ENCODE measurements at regions of chr4 and their contacts with region 1.

Region 1: GRCh38 chr4:117560329-117560728 is 474.0 kb upstream of the NDST3 start:
- DNase-seq: peak; percentile 50
- ATAC-seq: no peak; the same call in none of the 2 replicates
- H3K4me3 ChIP-seq: no peak overlapping the region
- H3K27ac ChIP-seq: no peak overlapping the region
- H3K4me1 ChIP-seq: no peaks in the 10 kb centered on the region
- H3K27me3 ChIP-seq: no peaks in the 10 kb centered on the region
- CTCF ChIP-seq: peak; percentile 52; the same call in 1 of the 2 replicates

Region 2: GRCh38 chr4:116849620-116850019 is 710.7 kb before region 1 on chr4:
- CTCF ChIA-PET with region 1: no interaction called
- POLR2A ChIA-PET with region 1: no interaction called
- intact Hi-C with region 1: loop called (anchors 2 kb)
- DNase-seq: no peak
- ATAC-seq: peak; percentile 54
- H3K4me3 ChIP-seq: no peak overlapping the region
- H3K27ac ChIP-seq: no peak overlapping the region
- H3K4me1 ChIP-seq: no peaks in the 10 kb centered on the region
- H3K27me3 ChIP-seq: no peaks in the 10 kb centered on the region
- CTCF ChIP-seq: peak; percentile 29; the same call in 1 of the 2 replicates

Region 3: GRCh38 chr4:117447925-117448324 is 112.4 kb before region 1 on chr4:
- CTCF ChIA-PET with region 1: no interaction called
- POLR2A ChIA-PET with region 1: no interaction called
- intact Hi-C with region 1: no loop called
- DNase-seq: no peak
- ATAC-seq: no peak
- H3K4me3 ChIP-seq: no peak overlapping the region
- H3K27ac ChIP-seq: no peak overlapping the region
- H3K4me1 ChIP-seq: no peaks in the 10 kb centered on the region
- H3K27me3 ChIP-seq: no peaks in the 10 kb centered on the region
- CTCF ChIP-seq: peak; percentile 48

Region 4: GRCh38 chr4:117481742-117482141 is 78.6 kb before region 1 on chr4:
- CTCF ChIA-PET with region 1: no interaction called
- POLR2A ChIA-PET with region 1: no interaction called
- intact Hi-C with region 1: no loop called
- DNase-seq: no peak
- ATAC-seq: no peak
- H3K4me3 ChIP-seq: no peak overlapping the region
- H3K27ac ChIP-seq: no peak overlapping the region
- H3K4me1 ChIP-seq: no peaks in the 10 kb centered on the region
- H3K27me3 ChIP-seq: no peaks in the 10 kb centered on the region
- CTCF ChIP-seq: no peak

Region 5: DNA sequence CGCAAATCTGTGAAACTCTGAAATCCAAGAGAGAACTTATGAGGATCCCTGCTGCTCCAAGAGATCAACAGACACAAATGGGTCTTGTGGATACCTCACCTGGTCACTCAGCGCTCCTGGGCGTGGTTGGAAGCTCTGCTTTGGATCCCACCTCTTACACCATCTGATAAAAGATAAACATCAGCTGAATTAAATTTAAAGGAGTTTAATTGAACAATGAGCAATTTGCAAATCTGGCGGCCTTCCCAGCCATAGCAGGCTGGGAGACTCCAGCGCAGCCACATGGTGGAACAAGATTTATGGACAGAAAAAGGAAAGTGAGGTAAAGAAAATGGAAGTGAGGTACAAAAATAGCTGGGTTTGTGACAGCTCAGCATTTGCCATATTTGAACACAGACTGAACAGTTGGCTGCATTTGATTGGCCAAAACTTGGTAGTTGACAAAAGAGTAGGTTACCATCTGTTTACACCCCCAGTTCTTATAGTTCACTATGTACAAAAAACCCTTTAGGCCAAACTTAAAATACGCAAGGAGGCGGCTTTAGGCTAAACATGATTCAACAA is 36.7 kb after region 1 on chr4:
- CTCF ChIA-PET with region 1: no interaction called
- POLR2A ChIA-PET with region 1: no interaction called
- intact Hi-C with region 1: no loop called
- DNase-seq: no peak
- ATAC-seq: no peak
- H3K4me3 ChIP-seq: no peak overlapping the region
- H3K27ac ChIP-seq: no peak overlapping the region
- H3K4me1 ChIP-seq: no peaks in the 10 kb centered on the region
- H3K27me3 ChIP-seq: no peaks in the 10 kb centered on the region
- CTCF ChIP-seq: no peak

Region 6: GRCh38 chr4:117965622-117966021 is 405.3 kb after region 1 on chr4:
- CTCF ChIA-PET with region 1: no interaction called
- POLR2A ChIA-PET with region 1: no interaction called
- intact Hi-C with region 1: loop called (anchors 5 kb)
- DNase-seq: no peak
- ATAC-seq: no peak
- H3K4me3 ChIP-seq: no peak overlapping the region
- H3K27ac ChIP-seq: no peak overlapping the region
- H3K4me1 ChIP-seq: no peaks in the 10 kb centered on the region
- H3K27me3 ChIP-seq: no peaks in the 10 kb centered on the region
- CTCF ChIP-seq: no peak